Mammary epithelial cell (primary cell): ENCODE measurements at regions of chr15 and their contacts with region 1.

Region 1: DNA sequence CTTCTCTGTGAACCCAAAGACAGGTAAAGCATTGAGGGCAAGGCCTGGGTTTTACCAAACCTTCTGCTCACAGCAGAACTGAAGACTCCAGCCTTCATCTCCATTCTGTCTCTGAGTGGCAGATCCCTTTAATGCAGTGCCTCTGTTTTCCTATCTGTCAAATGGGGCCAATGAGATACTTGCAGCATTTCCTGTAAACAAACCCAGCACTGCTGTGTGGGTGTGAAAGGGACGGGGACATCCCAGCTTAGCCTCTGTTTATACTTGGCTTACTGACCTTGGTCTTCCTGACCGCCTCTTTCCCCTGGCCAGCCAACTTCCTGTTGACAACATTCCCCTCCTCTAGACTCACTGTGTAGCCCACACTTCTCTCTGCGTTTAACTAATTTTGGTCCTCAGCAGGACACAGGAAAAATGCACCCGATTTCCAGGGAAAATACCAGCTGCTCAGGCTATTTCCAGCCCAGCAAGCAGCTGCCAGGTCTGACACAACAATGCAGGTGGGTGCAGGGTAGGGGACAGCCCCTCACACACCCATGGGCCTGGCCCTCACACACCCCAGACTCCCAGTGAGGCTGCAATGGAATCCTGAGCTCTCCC is 105.9 kb upstream of the HERC1 start:
- DNase-seq: no peak
- H3K4me3 ChIP-seq: no peak overlapping the region
- H3K27ac ChIP-seq: no peak overlapping the region
- H3K4me1 ChIP-seq: peaks cover 5% of the 10 kb centered on the region
- H3K27me3 ChIP-seq: no peaks in the 10 kb centered on the region
- CTCF ChIP-seq: no peak

Region 2: GRCh38 chr15:63772520-63772919 is 167.1 kb before region 1 on chr15:
- CTCF ChIA-PET with region 1: interaction called, 27 read pairs
- dilution Hi-C with region 1: no loop called
- in situ Hi-C with region 1: no loop called
- intact Hi-C with region 1: no loop called
- DNase-seq: no peak
- H3K4me3 ChIP-seq: no peak overlapping the region
- H3K27ac ChIP-seq: no peak overlapping the region
- H3K4me1 ChIP-seq: no peaks in the 10 kb centered on the region
- H3K27me3 ChIP-seq: no peaks in the 10 kb centered on the region
- CTCF ChIP-seq: no peak

Region 3: DNA sequence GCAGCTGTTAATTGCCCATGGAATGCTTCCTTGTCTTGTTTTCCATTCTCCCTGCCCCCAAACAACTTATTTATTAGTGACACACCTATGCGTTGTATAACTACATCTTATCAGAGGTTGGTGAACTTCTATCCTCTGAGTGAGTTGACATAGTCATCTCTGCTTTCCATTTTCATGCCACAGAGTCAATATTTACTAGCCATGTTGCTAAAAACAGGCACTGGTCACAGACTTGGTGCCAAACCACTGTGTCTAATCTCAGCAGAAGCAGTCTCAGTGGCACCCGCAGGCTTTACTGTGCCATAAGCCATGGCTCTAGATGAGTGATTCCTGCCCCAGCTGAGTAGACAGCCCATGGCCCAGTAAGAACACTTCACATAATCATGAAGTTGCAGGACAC is 80.1 kb after region 1 on chr15:
- CTCF ChIA-PET with region 1: no interaction called
- dilution Hi-C with region 1: no loop called
- in situ Hi-C with region 1: no loop called
- intact Hi-C with region 1: no loop called
- DNase-seq: no peak
- H3K4me3 ChIP-seq: no peak overlapping the region
- H3K27ac ChIP-seq: no peak overlapping the region
- H3K4me1 ChIP-seq: peaks cover 28% of the 10 kb centered on the region
- H3K27me3 ChIP-seq: no peaks in the 10 kb centered on the region
- CTCF ChIP-seq: no peak